Activated T-helper 2 cell treated with anti-CD3 and anti-CD28 coated beads, Interferon-gamma antibody, Interleukin-2, Interleukin-4, amounts not matched to agents 10 μg/mL and 5 μg/mL and 100 μg/mL, durations not matched to agents 14 hours and 24 hours and 36 hours (primary cell): ENCODE measurements at regions of chr4 and their contacts with region 1.

Region 1: DNA sequence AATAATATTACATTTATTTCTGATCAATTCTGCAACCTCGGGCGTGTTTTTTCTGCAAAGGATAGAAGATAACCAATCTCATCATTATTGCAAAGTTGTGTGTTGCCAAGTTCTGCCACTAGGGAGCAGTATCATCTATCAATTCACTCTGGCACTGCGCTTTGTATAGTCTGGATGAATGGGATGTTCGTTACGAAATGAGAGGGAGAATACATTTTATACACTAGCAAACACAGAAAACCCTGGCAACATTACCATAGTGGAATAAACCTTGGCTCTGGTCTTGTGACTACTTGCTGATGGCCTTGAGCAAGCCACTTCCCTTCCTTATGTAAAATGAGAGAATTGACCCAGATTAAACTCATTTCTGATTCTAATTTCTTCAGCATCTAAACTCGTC is 97.5 kb upstream of the ZNF518B start:
- DNase-seq: no peak
- H3K4me3 Mint-ChIP-seq: no peak overlapping the region
- H3K27ac Mint-ChIP-seq: no peak overlapping the region
- H3K4me1 Mint-ChIP-seq: peaks cover 5% of the 10 kb centered on the region
- H3K27me3 Mint-ChIP-seq: peaks cover 2% of the 10 kb centered on the region

Region 2: GRCh38 chr4:10490996-10491395 is 63.7 kb before region 1 on chr4:
- intact Hi-C with region 1: no loop called
- DNase-seq: no peak
- H3K4me3 Mint-ChIP-seq: no peak overlapping the region
- H3K27ac Mint-ChIP-seq: no peak overlapping the region
- H3K4me1 Mint-ChIP-seq: no peaks in the 10 kb centered on the region
- H3K27me3 Mint-ChIP-seq: no peaks in the 10 kb centered on the region

Region 3: GRCh38 chr4:11073621-11074051 is 518.9 kb after region 1 on chr4:
- intact Hi-C with region 1: no loop called
- DNase-seq: no peak
- H3K4me3 Mint-ChIP-seq: no peak overlapping the region
- H3K27ac Mint-ChIP-seq: no peak overlapping the region
- H3K4me1 Mint-ChIP-seq: no peaks in the 10 kb centered on the region
- H3K27me3 Mint-ChIP-seq: no peaks in the 10 kb centered on the region

Region 4: DNA sequence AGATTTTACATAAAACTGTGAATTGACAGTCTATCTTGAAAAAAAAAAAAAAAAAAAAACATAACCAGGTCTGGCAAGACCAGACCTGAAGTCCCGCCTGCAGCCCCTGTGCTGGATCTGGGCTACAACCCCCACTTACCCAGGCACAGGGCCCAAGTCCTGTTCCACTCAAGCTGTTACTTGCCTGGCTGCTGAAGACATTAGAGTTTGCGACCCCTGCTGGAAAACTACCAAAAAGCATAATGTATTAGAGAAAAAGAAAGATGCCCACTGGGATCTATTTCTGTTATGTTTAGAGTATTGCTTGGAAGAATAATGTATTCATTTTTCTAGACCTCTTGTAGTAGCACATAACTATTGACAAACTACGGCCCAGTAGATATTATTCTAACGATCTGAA is 869.3 kb after region 1 on chr4:
- intact Hi-C with region 1: loop called (anchors 1 kb)
- DNase-seq: no peak
- H3K4me3 Mint-ChIP-seq: no peak overlapping the region
- H3K27ac Mint-ChIP-seq: no peak overlapping the region
- H3K4me1 Mint-ChIP-seq: peaks cover 16% of the 10 kb centered on the region
- H3K27me3 Mint-ChIP-seq: peaks cover 43% of the 10 kb centered on the region